ENCODE measurements at regions of chr10 and their contacts with region 1.

Region 1: DNA sequence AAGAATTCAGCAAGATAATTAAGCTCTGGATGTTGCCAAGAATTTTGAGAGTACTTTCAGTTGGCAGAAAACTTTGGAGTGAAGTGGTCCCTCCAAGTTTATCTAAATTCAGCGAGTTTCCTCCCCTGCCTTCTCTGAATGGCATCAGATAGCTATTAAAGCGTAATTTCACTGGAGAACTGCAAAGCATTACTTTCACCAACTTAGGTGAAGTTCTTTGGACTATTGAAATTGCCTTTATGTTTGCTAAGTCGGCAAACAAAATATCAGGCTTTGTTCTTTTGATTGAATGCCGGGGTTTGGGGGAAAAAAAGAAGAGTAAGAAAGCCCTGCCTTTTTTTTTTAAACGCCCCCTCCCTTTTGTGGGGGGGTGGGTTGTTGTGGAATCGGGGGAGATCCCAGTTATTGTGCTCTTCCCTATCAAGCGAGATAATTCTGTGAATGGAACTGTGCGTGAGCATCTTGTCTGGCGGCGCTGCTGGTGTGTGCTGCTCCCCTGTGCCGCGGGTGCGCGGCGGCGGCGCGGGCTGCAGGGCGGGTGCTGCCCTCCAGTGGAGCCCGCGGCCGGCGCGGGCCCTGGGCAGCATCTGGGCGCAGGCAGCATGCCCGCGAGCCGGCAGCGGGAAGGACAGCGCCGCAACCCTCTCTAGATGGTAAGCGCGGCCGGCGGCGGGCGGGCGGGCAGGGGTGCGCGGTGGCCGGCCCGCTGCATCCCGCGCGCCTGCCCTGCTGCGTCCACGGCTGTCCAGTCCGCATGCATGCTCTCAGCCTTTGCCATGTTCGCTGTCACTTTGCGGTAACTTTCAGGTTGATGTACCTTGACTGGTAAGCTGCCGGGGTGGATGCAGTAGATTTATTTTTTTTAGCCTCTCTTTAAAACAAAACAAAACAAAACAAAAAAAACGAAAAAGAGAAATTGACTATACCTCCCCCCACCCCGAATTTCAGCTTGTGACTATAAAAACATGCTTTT is 176.5 kb downstream of the TCF7L2 start:
- DNase-seq: peak; percentile 87
- H3K4me3 ChIP-seq: peak overlapping the region; percentile 34
- H3K27ac ChIP-seq: no peak overlapping the region
- H3K4me1 ChIP-seq: peaks cover 18% of the 10 kb centered on the region
- H3K27me3 ChIP-seq: peaks cover 9% of the 10 kb centered on the region
- CTCF ChIP-seq: peak; percentile 57

Region 2: DNA sequence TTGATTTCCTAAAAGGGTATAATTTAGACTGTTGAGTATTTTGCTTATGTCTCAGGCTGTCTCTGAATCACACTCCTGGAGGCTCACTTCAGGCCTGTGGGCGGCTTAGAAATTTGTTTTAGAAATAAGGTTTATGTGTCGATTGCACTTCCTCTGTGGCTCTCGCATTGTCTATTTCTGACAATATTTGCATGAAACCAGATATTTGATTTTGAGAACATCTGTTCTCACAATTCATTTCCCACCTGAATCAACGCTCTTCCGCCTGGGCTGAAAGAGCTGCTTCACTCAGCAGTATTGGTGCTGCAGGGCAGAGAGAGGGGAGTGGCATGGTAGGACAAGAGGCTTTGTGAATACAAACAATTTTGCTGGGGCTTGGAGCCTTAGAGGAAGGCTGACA is 1787.7 kb before region 1 on chr10:
- CTCF ChIA-PET with region 1: no interaction called
- POLR2A ChIA-PET with region 1: no interaction called
- intact Hi-C with region 1: no loop called
- DNase-seq: no peak
- H3K4me3 ChIP-seq: no peak overlapping the region
- H3K27ac ChIP-seq: no peak overlapping the region
- H3K4me1 ChIP-seq: no peaks in the 10 kb centered on the region
- H3K27me3 ChIP-seq: no peaks in the 10 kb centered on the region
- CTCF ChIP-seq: no peak

Region 3: GRCh38 chr10:112565434-112566053 is 561.0 kb before region 1 on chr10:
- CTCF ChIA-PET with region 1: no interaction called
- POLR2A ChIA-PET with region 1: no interaction called
- intact Hi-C with region 1: loop called (anchors 2 kb)
- DNase-seq: peak; percentile 79
- H3K4me3 ChIP-seq: no peak overlapping the region
- H3K27ac ChIP-seq: no peak overlapping the region
- H3K4me1 ChIP-seq: no peaks in the 10 kb centered on the region
- H3K27me3 ChIP-seq: no peaks in the 10 kb centered on the region
- CTCF ChIP-seq: peak; percentile 78

Region 4: DNA sequence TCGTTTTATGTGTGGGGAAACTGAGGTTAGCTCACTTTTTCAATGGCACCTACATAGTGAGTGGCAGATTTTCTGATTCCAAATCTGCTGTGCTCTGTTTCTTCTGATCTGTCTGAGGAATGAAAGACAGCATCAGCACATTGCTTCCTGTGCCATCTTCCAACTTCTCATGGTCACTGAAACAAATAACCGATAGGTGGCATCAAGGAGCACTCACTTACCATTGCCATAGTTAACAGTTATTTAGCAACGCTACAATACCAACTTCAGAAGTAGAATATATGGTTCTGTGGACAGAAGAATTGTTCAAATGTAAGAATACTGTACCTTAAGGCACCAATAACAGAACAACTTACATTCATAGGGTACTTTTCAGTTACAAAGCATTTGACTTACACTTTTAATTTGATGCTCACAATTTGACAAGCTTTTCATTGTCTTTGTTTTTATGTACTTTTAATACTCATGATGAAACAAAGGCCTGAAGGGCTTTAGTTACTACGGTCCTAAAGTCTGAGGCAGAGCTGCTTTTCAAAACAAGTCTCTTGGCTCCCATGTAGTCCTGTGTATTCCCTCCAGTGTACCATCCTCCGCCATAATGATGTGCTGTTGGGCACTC is 405.3 kb before region 1 on chr10:
- CTCF ChIA-PET with region 1: no interaction called
- POLR2A ChIA-PET with region 1: no interaction called
- intact Hi-C with region 1: loop called (anchors 5 kb)
- DNase-seq: peak; percentile 67
- H3K4me3 ChIP-seq: no peak overlapping the region
- H3K27ac ChIP-seq: no peak overlapping the region
- H3K4me1 ChIP-seq: peaks cover 4% of the 10 kb centered on the region
- H3K27me3 ChIP-seq: no peaks in the 10 kb centered on the region
- CTCF ChIP-seq: peak; percentile 76

Region 5: DNA sequence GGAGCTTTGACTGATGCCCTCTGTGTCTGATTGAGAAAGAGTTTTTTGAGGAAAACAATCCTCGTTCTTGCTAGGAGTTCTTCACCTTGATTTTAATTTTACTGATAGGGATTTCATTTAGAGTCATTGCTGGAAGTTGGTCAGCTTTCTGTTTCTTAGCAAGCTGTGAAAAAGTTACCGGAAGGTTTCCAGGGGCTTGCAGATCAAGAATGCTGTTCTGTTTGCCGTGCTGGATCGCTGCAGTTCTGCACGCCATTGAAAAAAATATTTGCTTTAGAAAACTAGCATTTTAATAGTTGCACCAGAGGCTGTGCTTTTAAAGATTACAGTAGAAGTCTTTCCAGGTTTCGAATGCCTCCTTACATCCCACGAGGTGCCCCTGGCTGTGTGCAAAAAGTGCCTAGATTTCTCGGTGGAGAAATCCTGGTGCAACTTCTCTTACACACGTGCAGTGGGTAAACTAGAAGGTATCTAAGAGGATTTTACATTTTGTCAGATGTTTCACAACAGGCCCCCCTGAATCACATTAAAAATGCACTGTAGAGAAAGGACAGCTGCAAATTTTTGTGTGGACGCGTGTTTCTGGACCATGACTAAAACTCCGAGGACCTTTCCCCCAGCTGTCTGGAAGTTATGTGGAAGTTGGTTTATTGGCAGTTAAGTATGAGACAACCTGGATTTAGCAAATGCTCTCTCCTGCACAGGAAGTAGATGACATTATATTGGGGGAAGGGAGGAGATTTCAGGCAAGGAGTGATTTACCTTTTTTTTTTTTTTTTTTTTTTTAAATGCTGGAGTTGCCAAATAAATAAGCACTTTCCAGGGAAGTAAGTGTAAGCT is 170.7 kb before region 1 on chr10:
- CTCF ChIA-PET with region 1: no interaction called
- POLR2A ChIA-PET with region 1: no interaction called
- intact Hi-C with region 1: loop called (anchors 5 kb)
- DNase-seq: no peak
- H3K4me3 ChIP-seq: no peak overlapping the region
- H3K27ac ChIP-seq: no peak overlapping the region
- H3K4me1 ChIP-seq: peaks cover 78% of the 10 kb centered on the region
- H3K27me3 ChIP-seq: no peaks in the 10 kb centered on the region
- CTCF ChIP-seq: no peak

Measured in A673 (cell line).